Ovary (tissue), 10 donors: ENCODE measurements at regions of chr4 and their contacts with region 1.

Region 1: GRCh38 chr4:17810260-17811077 is at the starts of genes DCAF16 and NCAPG:
- DNase-seq: peak; percentile 99
- H3K4me3 ChIP-seq: peak within 1 kb of the TSS; percentile 90
- H3K27ac ChIP-seq: peak within 1 kb of the TSS; percentile 47 to 88
- H3K4me1 ChIP-seq: peaks cover 5% of the 10 kb centered on the region
- H3K27me3 ChIP-seq: no peaks in the 10 kb centered on the region
- CTCF ChIP-seq: no peak
- EP300 ChIP-seq: no peak
- POLR2A ChIP-seq: peak; percentile 92
- total RNA-seq, gene DCAF16: 31.4 to 65.0 (median 56.9) TPM
- total RNA-seq, gene NCAPG: 0.25 to 1.9 (median 0.48) TPM in 5 of 7 donors, not detected in the others

Region 2: GRCh38 chr4:17576932-17577665 is 233.4 kb before region 1 on chr4 and contains the start of gene LAP3:
- intact Hi-C with region 1: loop called in 1 of 4 experiments (anchors 10 kb)
- DNase-seq: peak; percentile 96 to 100 (median 99)
- H3K4me3 ChIP-seq: peak within 1 kb of the TSS; percentile 64
- H3K27ac ChIP-seq: peak within 1 kb of the TSS in 1 of 2 donors; percentile 77
- H3K4me1 ChIP-seq: peaks cover 5% of the 10 kb centered on the region
- H3K27me3 ChIP-seq: no peaks in the 10 kb centered on the region
- CTCF ChIP-seq: no peak
- EP300 ChIP-seq: no peak
- POLR2A ChIP-seq: peak; percentile 63
- total RNA-seq, gene LAP3: 23.5 to 54.7 (median 33.9) TPM

Region 3: DNA sequence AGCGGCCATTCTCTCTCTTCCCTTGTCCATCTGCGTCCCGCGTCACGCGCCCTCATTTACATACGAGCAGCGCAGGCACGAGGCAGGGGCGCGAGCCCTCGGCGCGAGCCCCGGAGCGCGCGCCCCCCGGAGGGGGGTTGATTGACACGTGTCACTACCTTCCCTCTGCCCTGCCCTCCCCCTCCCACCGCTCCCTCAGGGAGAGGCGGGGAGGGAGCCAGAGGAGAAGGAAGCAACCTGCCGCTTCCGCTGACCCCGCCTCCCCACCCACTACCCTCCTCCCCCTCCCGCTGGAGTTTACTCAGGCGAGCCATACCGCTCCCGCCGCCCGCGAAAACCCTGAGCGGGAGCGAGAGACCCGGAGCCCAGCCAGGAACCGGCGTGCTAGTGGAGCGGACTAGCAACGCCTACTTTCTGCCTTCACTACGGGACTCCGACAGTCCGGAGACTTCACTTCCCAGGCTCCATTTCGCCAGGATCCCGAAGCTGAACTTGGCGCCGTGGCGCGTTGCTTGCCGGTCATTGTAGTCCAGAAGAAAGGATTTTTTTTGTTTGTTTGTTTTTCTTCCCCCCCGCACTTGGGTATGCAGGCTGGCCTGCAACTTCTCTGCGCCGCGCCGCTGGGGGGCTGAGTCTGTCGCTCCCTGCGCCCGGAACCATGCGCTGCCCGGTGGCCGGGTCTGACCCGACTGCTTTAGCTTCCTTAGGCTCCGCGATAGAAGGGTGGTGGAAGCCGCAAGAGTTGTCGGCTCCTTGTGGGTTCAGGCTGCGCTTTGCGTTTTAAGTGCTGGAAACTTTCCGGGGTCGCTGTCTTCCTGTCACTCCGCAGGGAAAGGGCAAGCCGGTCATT is 211.5 kb after region 1 on chr4 and contains the start of gene LCORL:
- intact Hi-C with region 1: loop called in 1 of 4 experiments (anchors 2 kb)
- DNase-seq: peak; percentile 93 to 95 (median 94)
- H3K4me3 ChIP-seq: peak within 1 kb of the TSS; percentile 97
- H3K27ac ChIP-seq: peak within 1 kb of the TSS; percentile 87 to 96
- H3K4me1 ChIP-seq: no peaks in the 10 kb centered on the region
- H3K27me3 ChIP-seq: no peaks in the 10 kb centered on the region
- CTCF ChIP-seq: no peak
- EP300 ChIP-seq: no peak
- POLR2A ChIP-seq: no peak
- total RNA-seq, gene LCORL: 12.6 to 21.8 (median 16.9) TPM

Region 4: GRCh38 chr4:18582841-18583240 is 772.4 kb after region 1 on chr4:
- intact Hi-C with region 1: loop called in 1 of 4 experiments (anchors 10 kb)
- DNase-seq: no peak
- H3K4me3 ChIP-seq: no peak overlapping the region
- H3K27ac ChIP-seq: no peak overlapping the region
- H3K4me1 ChIP-seq: no peaks in the 10 kb centered on the region
- H3K27me3 ChIP-seq: no peaks in the 10 kb centered on the region
- CTCF ChIP-seq: no peak
- EP300 ChIP-seq: no peak
- POLR2A ChIP-seq: no peak

Region 5: GRCh38 chr4:18593445-18594002 is 783.1 kb after region 1 on chr4:
- intact Hi-C with region 1: loop called in 2 of 4 experiments (anchors 10 kb)
- DNase-seq: peak in 4 of 5 donors; percentile 25 to 53 (median 28)
- H3K4me3 ChIP-seq: no peak overlapping the region
- H3K27ac ChIP-seq: no peak overlapping the region
- H3K4me1 ChIP-seq: no peaks in the 10 kb centered on the region
- H3K27me3 ChIP-seq: no peaks in the 10 kb centered on the region
- CTCF ChIP-seq: peak; percentile 30 to 54 (median 38)
- EP300 ChIP-seq: no peak
- POLR2A ChIP-seq: no peak